ENCODE measurements at regions of chr14 and their contacts with region 1.

Region 1: GRCh38 chr14:104677512-104678332 is 11.7 kb upstream of the INF2 start:
- DNase-seq: peak; percentile 88
- H3K4me3 Mint-ChIP-seq: peak overlapping the region; percentile 62
- H3K27ac Mint-ChIP-seq: peak overlapping the region; percentile 58
- H3K4me1 Mint-ChIP-seq: peaks cover 12% of the 10 kb centered on the region
- H3K27me3 Mint-ChIP-seq: no peaks in the 10 kb centered on the region

Region 2: DNA sequence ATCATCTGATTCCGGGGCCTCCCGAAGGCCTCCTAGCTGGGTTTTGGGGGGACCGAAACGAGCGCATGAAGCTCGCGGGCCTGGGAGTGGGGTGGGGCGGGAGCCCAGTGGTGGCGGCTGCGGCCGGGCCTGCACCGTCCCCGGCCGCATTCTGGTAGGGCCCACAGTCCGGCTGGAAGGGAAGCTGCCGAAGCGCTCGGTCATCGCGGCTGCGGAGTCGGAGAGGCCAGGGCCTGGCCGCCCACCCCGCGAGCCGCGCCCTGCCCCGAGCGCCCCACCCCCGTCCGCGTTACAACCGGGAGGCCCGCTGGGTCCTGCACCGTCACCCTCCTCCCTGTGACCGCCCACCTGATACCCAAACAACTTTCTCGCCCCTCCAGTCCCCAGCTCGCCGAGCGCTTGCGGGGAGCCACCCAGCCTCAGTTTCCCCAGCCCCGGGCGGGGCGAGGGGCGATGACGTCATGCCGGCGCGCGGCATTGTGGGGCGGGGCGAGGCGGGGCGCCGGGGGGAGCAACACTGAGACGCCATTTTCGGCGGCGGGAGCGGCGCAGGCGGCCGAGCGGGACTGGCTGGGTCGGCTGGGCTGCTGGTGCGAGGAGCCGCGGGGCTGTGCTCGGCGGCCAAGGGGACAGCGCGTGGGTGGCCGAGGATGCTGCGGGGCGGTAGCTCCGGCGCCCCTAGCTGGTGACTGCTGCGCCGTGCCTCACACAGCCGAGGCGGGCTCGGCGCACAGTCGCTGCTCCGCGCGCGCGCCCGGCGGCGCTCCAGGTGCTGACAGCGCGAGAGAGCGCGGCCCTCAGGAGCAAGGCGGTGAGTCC is 1048.8 kb before region 1 on chr14 and contains the start of gene KLC1:
- CTCF ChIA-PET with region 1: no interaction called
- POLR2A ChIA-PET with region 1: no interaction called
- intact Hi-C with region 1: no loop called
- DNase-seq: peak; percentile 88
- H3K4me3 Mint-ChIP-seq: peak within 1 kb of the TSS; percentile 84
- H3K27ac Mint-ChIP-seq: peak within 1 kb of the TSS; percentile 83
- H3K4me1 Mint-ChIP-seq: peaks cover 36% of the 10 kb centered on the region
- H3K27me3 Mint-ChIP-seq: no peaks in the 10 kb centered on the region
- total RNA-seq, gene KLC1: 119 to 130 TPM

Region 3: GRCh38 chr14:104277416-104278213 is 400.1 kb before region 1 on chr14:
- CTCF ChIA-PET with region 1: no interaction called
- POLR2A ChIA-PET with region 1: no interaction called
- intact Hi-C with region 1: no loop called
- DNase-seq: peak; percentile 8
- H3K4me3 Mint-ChIP-seq: no peak overlapping the region
- H3K27ac Mint-ChIP-seq: no peak overlapping the region
- H3K4me1 Mint-ChIP-seq: no peaks in the 10 kb centered on the region
- H3K27me3 Mint-ChIP-seq: peaks cover 9% of the 10 kb centered on the region

Region 4: DNA sequence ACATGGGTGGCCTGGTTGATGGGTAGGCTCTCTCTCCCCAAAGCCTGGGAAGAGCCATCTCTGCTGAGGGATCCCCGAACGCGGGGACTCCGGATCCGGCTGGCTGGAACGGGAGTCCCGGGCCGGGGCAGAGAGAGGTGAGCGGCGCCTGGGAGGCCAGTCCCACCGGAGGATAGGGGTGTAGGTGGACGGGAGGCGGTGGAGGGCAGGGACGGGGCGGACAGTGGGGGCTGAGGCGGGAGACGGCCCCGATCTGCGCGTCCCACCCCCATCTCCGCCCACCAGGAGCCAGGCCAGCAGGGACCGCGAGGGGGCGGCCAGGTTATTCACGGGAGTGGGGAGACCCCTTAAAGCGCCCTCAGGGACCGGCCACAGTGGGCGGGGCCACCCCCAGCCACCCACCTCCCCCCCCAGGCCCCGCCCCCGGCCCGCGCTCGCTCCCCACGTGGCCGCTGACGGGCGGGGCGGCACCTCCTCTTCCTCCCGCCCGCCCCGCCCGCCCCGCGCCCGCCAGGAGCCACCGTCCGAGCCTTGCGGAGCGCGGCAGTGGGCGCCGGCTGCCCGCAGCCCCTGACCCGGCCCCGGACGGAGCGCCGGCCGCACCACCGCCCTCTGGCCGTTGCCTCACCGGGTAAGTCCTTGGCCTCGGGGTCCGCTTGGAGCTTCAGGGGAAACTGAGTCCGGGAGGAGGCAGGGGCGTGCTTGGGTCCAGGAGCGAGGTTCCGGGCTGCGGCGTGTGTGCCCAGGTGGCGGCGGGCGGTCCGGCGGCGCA is 11.6 kb after region 1 on chr14 and contains the start of gene INF2:
- CTCF ChIA-PET with region 1: interaction called, 10 read pairs
- POLR2A ChIA-PET with region 1: interaction called, 15 read pairs
- intact Hi-C with region 1: loop called (anchors 2 kb)
- DNase-seq: peak; percentile 61
- H3K4me3 Mint-ChIP-seq: peak within 1 kb of the TSS; percentile 78
- H3K27ac Mint-ChIP-seq: no peak within 1 kb of the TSS
- H3K4me1 Mint-ChIP-seq: peaks cover 54% of the 10 kb centered on the region
- H3K27me3 Mint-ChIP-seq: no peaks in the 10 kb centered on the region
- total RNA-seq, gene INF2: 66.7 to 71.5 TPM

Region 5: GRCh38 chr14:104694991-104695659 is 17.4 kb after region 1 on chr14:
- CTCF ChIA-PET with region 1: interaction called, 4 read pairs
- POLR2A ChIA-PET with region 1: interaction called, 15 read pairs
- intact Hi-C with region 1: loop called (anchors 2 kb)
- DNase-seq: peak; percentile 73
- H3K4me3 Mint-ChIP-seq: peak overlapping the region; percentile 49
- H3K27ac Mint-ChIP-seq: peak overlapping the region; percentile 80
- H3K4me1 Mint-ChIP-seq: peaks cover 41% of the 10 kb centered on the region
- H3K27me3 Mint-ChIP-seq: no peaks in the 10 kb centered on the region

Region 6: DNA sequence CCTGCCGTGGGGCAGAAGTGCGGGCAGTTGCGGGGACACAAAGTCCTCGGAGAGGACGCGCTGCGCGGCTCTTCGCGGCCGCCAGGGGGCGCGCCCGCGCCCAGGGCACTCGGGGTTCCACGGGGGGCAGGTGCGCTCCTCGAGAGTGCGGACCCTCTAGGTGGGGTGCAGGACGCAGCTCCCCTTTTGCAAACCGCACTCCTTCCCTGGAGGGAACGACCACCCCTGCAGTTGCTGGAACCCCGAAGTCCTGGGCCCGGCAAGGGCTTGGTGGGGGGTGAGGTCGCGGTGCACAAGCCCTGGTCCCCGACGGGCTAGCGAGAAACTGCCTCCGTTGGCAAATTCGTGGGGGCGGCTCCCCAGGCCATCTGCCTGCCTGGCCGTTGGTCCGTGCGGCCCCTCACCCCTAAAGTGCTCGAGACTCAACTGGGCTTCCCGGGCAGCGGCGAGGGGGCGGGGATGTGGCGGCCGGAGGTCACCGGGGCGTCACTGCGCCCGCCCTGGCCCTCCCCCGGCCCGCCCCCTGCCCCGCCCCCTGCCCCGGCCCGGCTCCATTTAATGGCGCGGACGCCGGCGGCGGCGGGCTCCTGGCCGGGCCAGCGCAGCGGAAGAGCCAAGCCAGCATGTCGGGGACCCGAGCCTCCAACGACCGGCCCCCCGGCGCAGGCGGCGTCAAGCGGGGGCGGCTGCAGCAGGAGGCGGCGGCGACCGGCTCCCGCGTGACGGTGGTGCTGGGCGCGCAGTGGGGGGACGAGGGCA is 46.1 kb after region 1 on chr14 and contains the start of gene ADSS1:
- CTCF ChIA-PET with region 1: no interaction called
- POLR2A ChIA-PET with region 1: no interaction called
- intact Hi-C with region 1: loop called (anchors 2 kb)
- DNase-seq: peak; percentile 66
- H3K4me3 Mint-ChIP-seq: peak within 1 kb of the TSS; percentile 61
- H3K27ac Mint-ChIP-seq: no peak within 1 kb of the TSS
- H3K4me1 Mint-ChIP-seq: no peaks in the 10 kb centered on the region
- H3K27me3 Mint-ChIP-seq: no peaks in the 10 kb centered on the region
- total RNA-seq, gene ADSS1: 2.3 to 3.3 TPM

Region 7: GRCh38 chr14:104865644-104866441 is 188.1 kb after region 1 on chr14:
- CTCF ChIA-PET with region 1: no interaction called
- POLR2A ChIA-PET with region 1: no interaction called
- intact Hi-C with region 1: no loop called
- DNase-seq: peak; percentile 53
- H3K4me3 Mint-ChIP-seq: peak overlapping the region; percentile 66
- H3K27ac Mint-ChIP-seq: no peak overlapping the region
- H3K4me1 Mint-ChIP-seq: no peaks in the 10 kb centered on the region
- H3K27me3 Mint-ChIP-seq: peaks cover 1% of the 10 kb centered on the region

Measured in activated CD4-positive, alpha-beta memory T cell treated with anti-CD3 and anti-CD28 coated beads for 36 hours (primary cell).